Panc1 (cell line): ENCODE measurements at regions of chr7 and their contacts with region 1.

Region 1: DNA sequence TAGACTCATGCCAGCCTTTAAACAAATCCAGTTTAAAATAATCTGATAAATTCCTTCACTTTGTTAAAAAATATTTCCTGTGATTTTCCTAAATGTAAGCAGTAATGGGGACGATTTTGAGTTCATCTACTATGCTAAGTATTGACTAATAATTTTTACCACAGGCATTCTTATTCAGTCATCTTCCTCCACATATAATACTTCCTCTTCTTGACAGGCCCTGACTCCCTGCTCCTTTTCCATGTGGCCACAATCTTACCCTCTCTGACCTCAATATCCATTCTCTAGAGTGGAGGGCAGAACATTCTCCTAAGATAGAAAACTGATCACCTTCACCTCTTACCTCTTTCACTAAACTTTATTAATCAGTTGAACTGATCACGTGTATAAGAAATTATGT is 7.8 kb downstream of the DNAJC2 start:
- DNase-seq: no peak
- ATAC-seq: no peak
- H3K4me3 ChIP-seq: no peak overlapping the region
- H3K27ac ChIP-seq: no peak overlapping the region
- H3K4me1 ChIP-seq: no peaks in the 10 kb centered on the region; the same call in none of the 2 replicates
- H3K27me3 ChIP-seq: no peaks in the 10 kb centered on the region
- CTCF ChIP-seq: no peak

Region 2: DNA sequence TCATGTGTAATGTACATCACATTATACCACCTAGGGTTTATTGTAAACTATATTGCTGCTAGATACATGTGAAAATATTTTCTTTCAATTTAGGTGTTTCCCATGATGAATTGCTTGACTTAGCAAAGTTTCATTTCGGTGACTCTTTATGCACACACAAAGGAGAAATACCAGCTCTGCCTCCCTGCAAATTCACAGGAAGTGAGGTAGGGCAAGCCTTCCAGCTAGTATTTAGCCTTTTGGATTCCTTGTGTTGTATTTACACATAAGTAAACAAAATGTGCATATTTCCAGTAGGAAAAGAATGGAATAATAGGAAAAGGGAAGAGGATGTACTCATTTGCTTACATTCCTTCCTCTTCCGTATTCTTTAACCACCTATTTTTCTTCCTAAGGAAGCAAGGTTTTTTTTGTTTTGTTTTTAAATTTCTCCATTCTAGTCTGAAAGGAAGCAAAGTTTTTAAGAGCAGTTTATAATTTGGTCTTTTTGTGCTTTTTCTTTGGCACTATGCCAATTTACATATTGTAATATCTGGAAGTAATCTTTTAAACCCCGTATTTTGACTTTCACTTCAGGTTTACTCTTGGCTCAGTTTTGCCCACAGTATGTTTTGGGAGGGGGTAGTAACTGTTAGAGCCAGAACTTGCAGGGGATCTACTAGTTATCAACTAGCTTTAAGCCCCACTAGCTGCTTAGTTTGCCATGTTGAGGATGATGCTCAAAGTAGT is 29.1 kb before region 1 on chr7:
- CTCF ChIA-PET with region 1: no interaction called
- POLR2A ChIA-PET with region 1: interaction called, 14 read pairs
- in situ Hi-C with region 1: no loop called
- intact Hi-C with region 1: no loop called
- DNase-seq: no peak
- ATAC-seq: no peak
- H3K4me3 ChIP-seq: no peak overlapping the region
- H3K27ac ChIP-seq: no peak overlapping the region
- H3K4me1 ChIP-seq: no peaks in the 10 kb centered on the region
- H3K27me3 ChIP-seq: no peaks in the 10 kb centered on the region
- CTCF ChIP-seq: no peak